ENCODE measurements at regions of chr2 and their contacts with region 1.

Region 1: GRCh38 chr2:219498280-219499057 is at the start of gene GMPPA:
- DNase-seq: peak; percentile 98
- ATAC-seq: peak; percentile 84
- H3K4me3 Mint-ChIP-seq: peak within 1 kb of the TSS; percentile 98
- H3K27ac Mint-ChIP-seq: peak within 1 kb of the TSS; percentile 99
- H3K4me1 Mint-ChIP-seq: peaks cover 52% of the 10 kb centered on the region
- H3K27me3 Mint-ChIP-seq: peaks cover 45% of the 10 kb centered on the region
- CTCF ChIP-seq: no peak
- total RNA-seq, gene GMPPA: 44.2 to 51.9 TPM (median 49.5 TPM) in 3 replicates

Region 2: DNA sequence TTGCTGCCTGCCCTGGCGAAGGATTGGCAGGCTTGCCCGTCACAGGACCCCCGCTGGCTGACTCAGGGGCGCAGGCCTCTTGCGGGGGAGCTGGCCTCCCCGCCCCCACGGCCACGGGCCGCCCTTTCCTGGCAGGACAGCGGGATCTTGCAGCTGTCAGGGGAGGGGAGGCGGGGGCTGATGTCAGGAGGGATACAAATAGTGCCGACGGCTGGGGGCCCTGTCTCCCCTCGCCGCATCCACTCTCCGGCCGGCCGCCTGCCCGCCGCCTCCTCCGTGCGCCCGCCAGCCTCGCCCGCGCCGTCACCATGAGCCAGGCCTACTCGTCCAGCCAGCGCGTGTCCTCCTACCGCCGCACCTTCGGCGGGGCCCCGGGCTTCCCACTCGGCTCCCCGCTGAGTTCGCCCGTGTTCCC is 80.3 kb before region 1 on chr2 and contains the start of gene DES:
- CTCF ChIA-PET with region 1: interaction called, 13 read pairs
- POLR2A ChIA-PET with region 1: no interaction called
- DNase-seq: no peak
- ATAC-seq: no peak
- H3K4me3 Mint-ChIP-seq: peak within 1 kb of the TSS; percentile 37
- H3K27ac Mint-ChIP-seq: no peak within 1 kb of the TSS
- H3K4me1 Mint-ChIP-seq: peaks cover 28% of the 10 kb centered on the region
- H3K27me3 Mint-ChIP-seq: peaks cover 38% of the 10 kb centered on the region
- CTCF ChIP-seq: no peak
- total RNA-seq, gene DES: 1.6 to 3.5 TPM (median 2.8 TPM) in 3 replicates

Region 3: GRCh38 chr2:219441451-219442255 is 56.8 kb before region 1 on chr2:
- CTCF ChIA-PET with region 1: interaction called, 24 read pairs
- POLR2A ChIA-PET with region 1: interaction called, 3 read pairs
- DNase-seq: peak; percentile 62
- ATAC-seq: peak; percentile 60
- H3K4me3 Mint-ChIP-seq: peak overlapping the region; percentile 82
- H3K27ac Mint-ChIP-seq: no peak overlapping the region
- H3K4me1 Mint-ChIP-seq: peaks cover 27% of the 10 kb centered on the region
- H3K27me3 Mint-ChIP-seq: peaks cover 22% of the 10 kb centered on the region
- CTCF ChIP-seq: no peak

Region 4: DNA sequence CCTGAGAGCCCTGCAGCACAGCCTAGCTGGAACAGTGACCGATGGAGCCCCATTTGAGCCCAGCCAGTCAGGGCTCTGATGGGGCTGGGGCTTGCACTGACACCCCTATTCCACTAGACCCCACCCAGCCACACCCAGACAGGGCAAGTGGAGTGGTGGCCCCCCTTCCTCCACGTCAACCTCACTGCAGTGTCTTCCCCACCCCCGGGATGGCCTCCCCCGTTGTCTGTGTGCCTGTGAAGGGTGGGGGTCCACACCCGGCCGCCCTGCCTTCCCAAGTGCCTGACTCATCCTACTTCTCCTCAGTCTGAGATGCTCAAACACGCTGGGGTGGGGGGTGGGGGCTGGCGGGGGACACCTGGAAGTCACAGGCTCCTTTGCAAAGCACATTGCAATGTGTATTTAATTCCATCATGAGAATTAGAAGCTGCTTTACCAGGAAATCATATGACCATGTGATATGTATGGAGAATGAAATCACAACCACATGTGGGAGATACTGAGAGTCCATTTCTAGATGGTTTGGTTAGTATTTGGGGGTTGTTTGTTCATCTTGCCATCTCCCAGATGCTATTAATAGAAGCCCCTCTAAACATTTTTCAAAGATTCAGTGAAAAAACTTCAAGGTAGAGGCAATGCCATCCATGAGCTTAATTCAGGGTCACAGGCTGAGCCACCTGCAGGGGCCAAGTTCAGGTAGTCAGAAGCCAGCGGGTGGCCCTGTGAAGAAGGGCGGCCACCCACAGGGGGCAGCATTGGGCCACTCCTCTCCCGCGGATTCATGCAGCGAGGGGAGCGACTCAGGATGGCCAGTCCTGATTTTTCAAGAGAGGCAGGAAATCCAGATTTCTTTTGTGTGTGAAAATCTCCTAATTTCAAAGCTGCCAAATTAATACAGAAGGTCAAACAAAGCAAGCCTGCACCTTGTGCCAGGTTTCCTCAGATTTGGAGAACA is 22.5 kb before region 1 on chr2:
- CTCF ChIA-PET with region 1: interaction called, 59 read pairs
- POLR2A ChIA-PET with region 1: interaction called, 4 read pairs
- DNase-seq: peak; percentile 86
- ATAC-seq: peak; percentile 48
- H3K4me3 Mint-ChIP-seq: peak overlapping the region; percentile 68
- H3K27ac Mint-ChIP-seq: peak overlapping the region; percentile 81; the same call in 1 of the 2 replicates
- H3K4me1 Mint-ChIP-seq: peaks cover 24% of the 10 kb centered on the region
- H3K27me3 Mint-ChIP-seq: no peaks in the 10 kb centered on the region; the same call in 1 of the 2 replicates
- CTCF ChIP-seq: peak; percentile 91

Region 5: DNA sequence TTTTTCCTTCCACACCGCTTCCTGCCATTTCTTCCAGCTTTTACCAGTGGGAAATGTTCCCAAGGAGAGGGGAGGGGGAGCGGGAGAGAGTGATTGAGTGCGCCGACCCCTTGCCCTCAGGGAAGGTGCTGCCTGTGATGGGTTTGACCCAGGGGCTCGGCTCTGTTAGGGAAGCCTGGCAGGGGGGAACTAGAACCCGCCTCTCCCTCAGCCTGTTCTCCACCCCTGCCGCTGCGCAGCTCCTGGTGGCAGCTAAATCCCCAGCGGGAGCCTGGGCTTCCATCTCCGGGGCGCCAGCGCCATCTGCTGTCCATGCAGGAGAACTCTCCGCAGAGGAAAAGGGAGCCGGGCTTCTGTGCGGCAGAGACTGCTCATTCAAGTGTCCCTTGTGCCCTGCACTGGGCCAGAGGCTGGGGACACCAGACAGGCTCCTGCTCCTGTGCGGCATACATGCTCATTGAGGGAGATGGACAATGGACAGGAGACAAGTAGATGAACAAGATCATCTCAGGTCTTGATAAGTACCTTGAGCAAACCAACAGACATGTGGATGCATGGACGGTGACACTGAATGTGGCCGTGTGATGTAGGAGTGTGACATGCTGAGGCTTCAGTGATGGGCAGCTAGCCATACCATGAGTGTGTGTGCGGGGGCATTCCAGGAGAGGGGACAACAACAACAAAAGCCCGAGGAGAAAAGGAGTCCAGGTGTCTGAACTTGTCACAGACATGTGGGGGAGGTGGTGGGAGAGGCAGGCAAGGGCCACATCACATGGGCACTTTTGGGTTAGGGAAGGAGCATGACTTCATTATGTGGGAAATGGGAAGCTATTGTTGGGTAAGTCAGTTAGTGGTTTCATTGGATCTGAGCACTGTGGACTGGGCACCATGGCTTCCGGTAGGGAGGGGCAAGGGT is 31.8 kb after region 1 on chr2:
- CTCF ChIA-PET with region 1: interaction called, 2,316 read pairs
- POLR2A ChIA-PET with region 1: interaction called, 5 read pairs
- DNase-seq: peak; percentile 92
- ATAC-seq: peak; percentile 75
- H3K4me3 Mint-ChIP-seq: peak overlapping the region; percentile 60
- H3K27ac Mint-ChIP-seq: no peak overlapping the region
- H3K4me1 Mint-ChIP-seq: peaks cover 30% of the 10 kb centered on the region
- H3K27me3 Mint-ChIP-seq: peaks cover 56% of the 10 kb centered on the region
- CTCF ChIP-seq: peak; percentile 88